Activated CD8-positive, alpha-beta T cell treated with anti-CD3 and anti-CD28 coated beads, Interleukin-2, amount 10 ng/mL, durations not matched to agents 7 days and 5 days (primary cell): ENCODE measurements at regions of chr1 and their contacts with region 1.

Region 1: DNA sequence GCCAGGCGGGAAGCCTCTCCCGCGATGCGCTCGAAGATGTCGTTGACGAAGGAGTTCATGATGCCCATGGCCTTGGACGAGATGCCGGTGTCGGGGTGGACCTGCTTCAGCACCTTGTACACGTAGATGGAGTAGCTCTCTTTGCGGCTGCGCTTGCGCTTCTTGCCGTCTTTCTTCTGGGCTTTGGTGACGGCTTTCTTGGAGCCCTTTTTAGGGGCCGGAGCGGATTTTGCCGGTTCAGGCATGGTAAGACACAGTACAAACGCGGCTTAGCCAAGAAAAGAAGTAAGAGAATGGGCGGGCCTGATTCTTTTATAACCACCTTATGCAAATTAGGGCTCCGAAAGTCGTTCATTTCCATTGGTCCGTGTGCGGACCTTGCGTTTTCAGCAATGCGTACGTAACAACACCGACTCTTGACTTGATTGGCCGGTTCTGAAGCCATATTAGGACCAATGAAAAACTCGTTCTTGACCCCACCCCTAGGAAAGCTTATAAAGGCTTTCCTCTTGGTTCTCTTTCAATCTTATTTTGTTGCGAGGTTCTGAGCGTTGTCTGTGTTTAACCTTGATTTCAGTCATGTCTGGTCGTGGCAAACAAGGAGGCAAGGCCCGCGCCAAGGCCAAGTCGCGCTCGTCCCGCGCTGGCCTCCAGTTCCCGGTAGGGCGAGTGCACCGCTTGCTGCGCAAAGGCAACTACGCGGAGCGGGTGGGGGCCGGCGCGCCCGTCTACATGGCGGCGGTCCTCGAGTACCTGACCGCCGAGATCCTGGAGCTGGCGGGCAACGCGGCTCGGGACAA is 12.8 kb upstream of the BOLA1 start:
- DNase-seq: peak; percentile 94
- ATAC-seq: peak; percentile 59
- H3K4me3 Mint-ChIP-seq: no peak overlapping the region
- H3K27ac Mint-ChIP-seq: no peak overlapping the region
- H3K4me1 Mint-ChIP-seq: peaks cover 19% of the 10 kb centered on the region
- H3K27me3 Mint-ChIP-seq: no peaks in the 10 kb centered on the region

Region 2: GRCh38 chr1:149844101-149844500 is 42.5 kb before region 1 on chr1:
- CTCF ChIA-PET with region 1: interaction called, 9 read pairs
- POLR2A ChIA-PET with region 1: interaction called, 310 read pairs
- DNase-seq: peak; percentile 55
- ATAC-seq: no peak
- H3K4me3 Mint-ChIP-seq: peak overlapping the region; percentile 85
- H3K27ac Mint-ChIP-seq: peak overlapping the region; percentile 97
- H3K4me1 Mint-ChIP-seq: peaks cover 42% of the 10 kb centered on the region
- H3K27me3 Mint-ChIP-seq: no peaks in the 10 kb centered on the region

Region 3: DNA sequence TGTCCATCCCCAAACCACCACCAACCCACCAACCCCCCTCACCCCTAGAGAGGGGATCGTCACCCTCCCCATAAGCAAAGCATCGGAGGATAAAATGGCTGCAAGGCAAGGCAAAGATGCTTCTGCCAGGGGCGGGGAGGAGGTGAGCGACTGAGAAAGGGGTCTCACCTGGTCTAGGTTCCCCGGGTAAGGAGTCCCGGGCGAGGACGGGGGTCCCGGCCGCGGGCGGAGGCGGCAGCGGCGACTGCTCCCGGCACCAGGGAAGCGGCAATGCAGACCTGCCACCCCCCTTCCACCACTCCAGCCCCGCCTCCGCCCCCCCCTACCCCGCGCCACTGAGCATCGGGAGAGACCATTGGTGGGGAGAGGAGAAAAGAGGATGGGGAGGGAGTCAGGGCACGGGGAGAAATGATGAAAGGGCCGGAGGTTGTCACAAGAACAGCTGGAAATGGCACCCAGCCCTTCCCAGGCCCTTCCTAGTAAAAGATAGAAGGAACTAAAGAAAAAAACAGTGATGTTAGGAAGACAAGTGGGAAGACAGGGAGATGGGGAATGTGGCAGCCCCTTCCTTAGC is 31.1 kb after region 1 on chr1 and contains the start of gene SV2A:
- CTCF ChIA-PET with region 1: interaction called, 8 read pairs
- POLR2A ChIA-PET with region 1: interaction called, 52 read pairs
- DNase-seq: peak; percentile 59
- ATAC-seq: peak; percentile 70
- H3K4me3 Mint-ChIP-seq: peak within 1 kb of the TSS; percentile 89
- H3K27ac Mint-ChIP-seq: peak within 1 kb of the TSS; percentile 67
- H3K4me1 Mint-ChIP-seq: peaks cover 56% of the 10 kb centered on the region
- H3K27me3 Mint-ChIP-seq: no peaks in the 10 kb centered on the region
- total RNA-seq, gene SV2A: 25.4 TPM

Region 4: GRCh38 chr1:149949911-149950310 is 63.3 kb after region 1 on chr1:
- CTCF ChIA-PET with region 1: no interaction called
- POLR2A ChIA-PET with region 1: interaction called, 13 read pairs
- DNase-seq: no peak
- ATAC-seq: no peak
- H3K4me3 Mint-ChIP-seq: no peak overlapping the region
- H3K27ac Mint-ChIP-seq: no peak overlapping the region
- H3K4me1 Mint-ChIP-seq: no peaks in the 10 kb centered on the region
- H3K27me3 Mint-ChIP-seq: no peaks in the 10 kb centered on the region

Region 5: GRCh38 chr1:150053926-150054325 is 167.3 kb after region 1 on chr1:
- CTCF ChIA-PET with region 1: interaction called, 17 read pairs
- POLR2A ChIA-PET with region 1: interaction called, 20 read pairs
- DNase-seq: no peak
- ATAC-seq: no peak
- H3K4me3 Mint-ChIP-seq: no peak overlapping the region
- H3K27ac Mint-ChIP-seq: no peak overlapping the region
- H3K4me1 Mint-ChIP-seq: peaks cover 6% of the 10 kb centered on the region
- H3K27me3 Mint-ChIP-seq: peaks cover 11% of the 10 kb centered on the region

Region 6: GRCh38 chr1:150109586-150109985 is 223.0 kb after region 1 on chr1:
- CTCF ChIA-PET with region 1: no interaction called
- POLR2A ChIA-PET with region 1: interaction called, 20 read pairs
- DNase-seq: peak; percentile 44
- ATAC-seq: peak; percentile 82
- H3K4me3 Mint-ChIP-seq: peak overlapping the region; percentile 72
- H3K27ac Mint-ChIP-seq: peak overlapping the region; percentile 91
- H3K4me1 Mint-ChIP-seq: peaks cover 76% of the 10 kb centered on the region
- H3K27me3 Mint-ChIP-seq: no peaks in the 10 kb centered on the region

Region 7: DNA sequence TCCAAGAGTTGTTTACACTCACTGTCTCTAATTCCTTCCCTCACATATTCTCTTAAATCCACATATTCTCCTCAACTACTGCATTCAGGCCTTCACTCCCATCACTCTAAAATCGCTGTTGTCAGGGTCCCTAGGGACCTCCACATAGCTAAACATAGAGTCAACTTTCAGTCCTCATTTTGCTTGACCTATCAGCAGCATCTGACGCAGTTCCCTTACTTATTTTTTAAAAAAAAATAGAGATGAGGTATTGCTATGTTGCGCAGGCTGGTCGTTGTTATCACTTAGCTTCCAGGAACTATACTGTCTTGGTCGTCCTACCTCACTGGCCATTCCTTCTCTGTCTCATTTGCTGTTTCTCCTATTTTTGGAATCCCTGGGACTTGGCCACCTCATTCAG is 251.4 kb after region 1 on chr1:
- CTCF ChIA-PET with region 1: no interaction called
- POLR2A ChIA-PET with region 1: no interaction called
- DNase-seq: no peak
- ATAC-seq: no peak
- H3K4me3 Mint-ChIP-seq: no peak overlapping the region
- H3K27ac Mint-ChIP-seq: no peak overlapping the region
- H3K4me1 Mint-ChIP-seq: no peaks in the 10 kb centered on the region
- H3K27me3 Mint-ChIP-seq: no peaks in the 10 kb centered on the region

Region 8: GRCh38 chr1:150235852-150236613 is 349.4 kb after region 1 on chr1 and contains the start of gene ANP32E:
- CTCF ChIA-PET with region 1: interaction called, 4 read pairs
- POLR2A ChIA-PET with region 1: interaction called, 64 read pairs
- DNase-seq: peak; percentile 97
- ATAC-seq: peak; percentile 89
- H3K4me3 Mint-ChIP-seq: no peak within 1 kb of the TSS
- H3K27ac Mint-ChIP-seq: no peak within 1 kb of the TSS
- H3K4me1 Mint-ChIP-seq: peaks cover 21% of the 10 kb centered on the region
- H3K27me3 Mint-ChIP-seq: peaks cover 7% of the 10 kb centered on the region
- total RNA-seq, gene ANP32E: 155 to 161 TPM